HCT116 (cell line): ENCODE measurements at regions of chr17 and their contacts with region 1.

Region 1: GRCh38 chr17:67689534-67690177 is 28.1 kb upstream of the NOL11 start:
- DNase-seq: peak; percentile 57
- ATAC-seq: peak; percentile 80
- H3K4me3 ChIP-seq: no peak overlapping the region
- H3K27ac ChIP-seq: no peak overlapping the region
- H3K4me1 ChIP-seq: no peaks in the 10 kb centered on the region
- H3K27me3 ChIP-seq: no peaks in the 10 kb centered on the region
- CTCF ChIP-seq: peak; percentile 76 to 96 (median 92)
- POLR2A ChIP-seq: no peak
- RAD21 ChIP-seq: peak; percentile 85

Region 2: DNA sequence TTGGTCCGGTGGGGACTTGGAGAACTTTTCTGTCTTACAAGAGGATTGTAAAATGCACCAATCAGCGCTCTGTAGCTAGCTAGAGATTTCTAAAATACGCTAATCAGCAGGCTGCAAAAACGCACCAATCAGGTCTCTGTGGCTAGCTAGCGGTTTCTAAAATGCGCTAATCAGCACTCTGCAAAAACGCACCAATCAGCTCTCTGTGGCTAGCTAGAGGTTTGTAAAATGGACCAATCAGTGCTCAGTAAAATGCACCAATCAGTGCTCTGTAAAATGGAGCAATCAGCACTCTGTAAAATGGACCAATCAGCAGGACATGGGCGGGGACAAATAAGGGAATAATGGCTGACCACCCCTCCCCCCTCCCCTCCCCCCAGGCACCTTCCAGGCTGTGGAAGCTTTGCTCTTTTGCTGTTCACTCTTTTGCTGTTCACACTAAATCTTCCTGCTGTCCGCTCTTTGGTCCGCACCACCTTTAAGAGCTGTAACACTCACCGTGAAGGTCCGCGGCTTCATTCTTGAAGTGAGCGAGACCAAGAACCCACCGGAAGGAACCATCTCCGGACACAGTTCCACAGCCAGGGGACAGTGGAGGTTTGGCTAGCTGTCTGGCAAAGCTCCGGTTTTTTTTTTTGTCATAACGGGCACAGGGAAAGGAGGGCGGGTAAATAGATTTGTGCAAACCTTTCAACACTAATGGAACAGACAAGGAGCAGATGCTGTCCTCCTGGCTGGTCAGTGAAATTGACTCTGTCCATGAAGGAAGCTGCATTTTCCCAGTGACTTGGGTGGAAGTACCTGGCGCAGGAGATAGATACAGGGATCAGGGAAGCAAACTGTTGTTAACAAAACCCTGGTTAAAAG is 304.3 kb before region 1 on chr17:
- CTCF ChIA-PET with region 1: interaction called, 11 read pairs
- POLR2A ChIA-PET with region 1: no interaction called
- RAD21 ChIA-PET with region 1: no interaction called
- intact Hi-C with region 1: loop called (anchors 1 kb)
- DNase-seq: no peak
- ATAC-seq: peak; percentile 18; the same call in 1 of the 2 replicates
- H3K4me3 ChIP-seq: no peak overlapping the region
- H3K27ac ChIP-seq: 0 out of 2 replicates have a peak overlapping the region, but pooled peaks have one; percentile 3
- H3K4me1 ChIP-seq: peaks cover 9 to 42% of the 10 kb centered on the region in 2 experiments
- H3K27me3 ChIP-seq: no peaks in the 10 kb centered on the region
- CTCF ChIP-seq: no peak
- POLR2A ChIP-seq: no peak
- RAD21 ChIP-seq: no peak

Region 3: GRCh38 chr17:67390646-67391384 is 298.8 kb before region 1 on chr17:
- CTCF ChIA-PET with region 1: interaction called, 11 read pairs
- POLR2A ChIA-PET with region 1: no interaction called
- RAD21 ChIA-PET with region 1: no interaction called
- intact Hi-C with region 1: loop called (anchors 1 kb)
- DNase-seq: peak; percentile 89
- ATAC-seq: peak; percentile 80
- H3K4me3 ChIP-seq: peak overlapping the region in 1 of 2 experiments; percentile 36; a peak in 2 of 4 replicates
- H3K27ac ChIP-seq: peak overlapping the region; percentile 54
- H3K4me1 ChIP-seq: peaks cover 26 to 58% of the 10 kb centered on the region in 2 experiments
- H3K27me3 ChIP-seq: no peaks in the 10 kb centered on the region
- CTCF ChIP-seq: no peak
- POLR2A ChIP-seq: no peak
- RAD21 ChIP-seq: peak; percentile 36; the same call in 1 of the 2 replicates

Region 4: DNA sequence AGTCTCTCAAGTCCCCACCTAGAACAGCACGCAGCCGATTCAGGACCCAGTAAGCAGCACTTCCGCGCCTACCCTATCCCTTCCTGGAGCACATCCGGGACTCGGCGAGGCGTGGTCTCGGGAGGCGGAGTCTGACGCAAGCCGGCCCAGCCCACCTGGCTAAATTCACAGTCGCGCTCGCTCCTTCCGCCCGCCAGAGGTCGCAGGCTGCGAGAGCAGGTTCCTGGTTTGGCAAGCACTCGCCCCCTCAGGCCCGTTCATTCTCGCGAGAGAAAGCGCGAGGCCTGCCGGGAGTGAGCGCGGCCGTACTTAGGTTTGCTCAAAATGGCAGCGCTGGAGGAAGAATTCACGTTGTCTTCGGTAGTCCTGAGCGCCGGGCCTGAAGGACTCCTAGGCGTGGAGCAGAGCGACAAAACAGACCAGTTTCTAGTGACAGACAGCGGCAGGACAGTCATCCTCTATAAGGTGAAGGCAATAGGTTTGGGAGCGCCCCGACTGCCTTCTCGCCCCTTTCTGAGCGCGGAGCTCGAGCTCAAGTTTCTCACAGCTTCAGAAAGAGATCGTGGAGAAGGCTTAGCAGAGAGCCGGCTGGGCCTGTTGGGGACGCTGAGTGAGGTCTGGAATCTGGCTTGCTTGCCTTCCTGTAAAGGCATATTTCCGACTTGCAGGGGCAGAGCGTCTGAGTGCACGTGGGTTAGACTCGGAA is 28.1 kb after region 1 on chr17 and contains the start of gene NOL11:
- CTCF ChIA-PET with region 1: no interaction called
- POLR2A ChIA-PET with region 1: no interaction called
- RAD21 ChIA-PET with region 1: no interaction called
- intact Hi-C with region 1: no loop called
- DNase-seq: peak; percentile 99
- ATAC-seq: peak; percentile 98
- H3K4me3 ChIP-seq: peak within 1 kb of the TSS; percentile 83 to 94
- H3K27ac ChIP-seq: peak within 1 kb of the TSS; percentile 77
- H3K4me1 ChIP-seq: peaks cover 7 to 16% of the 10 kb centered on the region in 2 experiments; a peak in 3 of 4 replicates
- H3K27me3 ChIP-seq: no peaks in the 10 kb centered on the region
- CTCF ChIP-seq: peak; percentile 92 to 99 (median 96)
- POLR2A ChIP-seq: peak; percentile 95
- RAD21 ChIP-seq: peak; percentile 83
- total RNA-seq, gene NOL11: 118 TPM